AG04450 (cell line): ENCODE measurements at regions of chr11 and their contacts with region 1.

Region 1: DNA sequence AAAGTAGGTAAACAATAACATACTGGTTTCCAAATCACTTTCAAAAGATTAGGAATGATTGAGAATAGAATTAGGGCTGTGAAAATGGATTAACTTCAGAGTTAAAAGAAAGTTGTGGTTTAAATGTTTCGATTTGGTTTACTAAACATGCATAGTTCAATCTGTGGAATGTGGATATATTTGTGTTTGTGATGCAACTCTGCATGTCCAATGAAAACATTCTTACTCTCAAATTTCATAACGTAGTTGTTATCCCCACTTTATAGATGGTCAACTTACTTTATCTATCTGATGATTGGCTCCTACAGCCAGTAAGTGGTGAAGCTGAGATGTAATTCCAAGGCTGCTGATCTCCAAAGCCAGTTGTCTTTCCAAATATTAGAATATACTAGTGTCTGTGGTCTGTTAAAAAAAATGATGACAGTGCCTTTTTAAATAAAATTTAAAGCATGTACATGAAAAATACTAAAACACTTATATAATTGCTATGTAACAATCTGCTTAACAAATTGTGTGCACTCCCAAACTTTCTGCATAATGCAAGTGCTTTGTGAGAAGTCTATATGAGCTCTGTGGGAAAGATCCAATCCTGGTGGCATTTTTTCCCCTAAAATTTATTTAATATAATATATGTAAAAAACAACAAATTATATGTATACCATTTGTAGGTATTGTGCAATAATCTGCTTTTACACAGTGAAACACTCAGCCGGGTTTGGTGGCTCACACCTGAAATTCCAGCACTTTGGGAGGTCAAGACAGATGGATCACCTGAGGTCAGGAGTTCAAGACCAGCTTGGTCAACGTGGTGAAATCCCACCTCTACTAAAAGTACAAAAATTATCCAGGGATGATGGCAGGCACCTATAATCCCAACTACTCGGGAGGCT is 9.7 kb upstream of the SIK3 start:
- DNase-seq: no peak
- H3K4me3 ChIP-seq: no peak overlapping the region
- H3K27ac ChIP-seq: no peak overlapping the region
- H3K27me3 ChIP-seq: no peaks in the 10 kb centered on the region
- CTCF ChIP-seq: no peak

Region 2: GRCh38 chr11:116432301-116432700 is 675.6 kb before region 1 on chr11:
- CTCF ChIA-PET with region 1: no interaction called
- POLR2A ChIA-PET with region 1: no interaction called
- DNase-seq: no peak
- H3K4me3 ChIP-seq: no peak overlapping the region
- H3K27ac ChIP-seq: no peak overlapping the region
- H3K27me3 ChIP-seq: peaks cover 3% of the 10 kb centered on the region
- CTCF ChIP-seq: no peak

Region 3: DNA sequence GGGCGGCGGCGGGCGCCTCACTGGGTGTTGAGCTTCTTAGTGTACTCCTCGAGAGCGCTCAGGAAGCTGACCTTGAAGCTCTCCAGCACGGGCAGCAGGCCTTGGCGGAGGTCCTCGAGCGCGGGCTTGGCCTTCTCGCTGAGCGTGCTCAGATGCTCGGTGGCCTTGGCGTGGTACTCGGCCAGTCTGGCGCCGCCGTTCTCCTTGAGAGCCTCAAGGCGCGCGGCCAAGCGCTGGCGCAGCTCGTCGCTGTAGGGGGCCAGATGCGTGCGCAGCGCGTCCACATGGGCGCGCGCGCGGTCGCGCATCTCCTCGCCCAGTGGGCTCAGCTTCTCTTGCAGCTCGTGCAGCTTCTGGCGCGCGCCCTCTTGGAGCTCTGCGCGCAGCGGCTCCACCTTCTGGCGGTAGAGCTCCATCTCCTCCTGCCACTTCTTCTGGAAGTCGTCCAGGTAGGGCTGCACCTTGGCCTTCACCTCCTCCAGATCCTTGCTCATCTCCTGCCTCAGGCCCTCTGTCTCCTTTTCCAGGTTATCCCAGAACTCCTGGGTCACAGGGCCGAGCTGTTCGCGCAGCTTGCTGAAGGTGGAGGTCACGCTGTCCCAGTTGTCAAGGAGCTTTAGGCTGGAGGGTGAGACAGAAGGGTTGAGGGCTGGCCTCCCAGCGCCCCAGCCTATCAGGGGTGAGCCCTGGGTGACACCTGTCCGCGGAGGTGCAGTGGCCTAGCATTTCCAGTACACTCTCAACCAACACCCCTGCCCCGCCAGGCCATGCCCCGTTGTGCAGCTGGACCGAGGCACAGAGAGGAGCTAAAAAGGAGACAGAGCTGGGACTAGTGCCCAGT is 271.9 kb before region 1 on chr11:
- CTCF ChIA-PET with region 1: interaction called, 21 read pairs
- POLR2A ChIA-PET with region 1: no interaction called
- DNase-seq: peak; percentile 87
- H3K4me3 ChIP-seq: peak overlapping the region; percentile 55
- H3K27ac ChIP-seq: peak overlapping the region; percentile 21
- H3K27me3 ChIP-seq: no peaks in the 10 kb centered on the region
- CTCF ChIP-seq: peak; percentile 69

Region 4: GRCh38 chr11:116879800-116880625 is 227.9 kb before region 1 on chr11:
- CTCF ChIA-PET with region 1: interaction called, 113 read pairs
- POLR2A ChIA-PET with region 1: no interaction called
- DNase-seq: peak; percentile 59
- H3K4me3 ChIP-seq: no peak overlapping the region
- H3K27ac ChIP-seq: no peak overlapping the region
- H3K27me3 ChIP-seq: no peaks in the 10 kb centered on the region
- CTCF ChIP-seq: peak; percentile 89

Region 5: DNA sequence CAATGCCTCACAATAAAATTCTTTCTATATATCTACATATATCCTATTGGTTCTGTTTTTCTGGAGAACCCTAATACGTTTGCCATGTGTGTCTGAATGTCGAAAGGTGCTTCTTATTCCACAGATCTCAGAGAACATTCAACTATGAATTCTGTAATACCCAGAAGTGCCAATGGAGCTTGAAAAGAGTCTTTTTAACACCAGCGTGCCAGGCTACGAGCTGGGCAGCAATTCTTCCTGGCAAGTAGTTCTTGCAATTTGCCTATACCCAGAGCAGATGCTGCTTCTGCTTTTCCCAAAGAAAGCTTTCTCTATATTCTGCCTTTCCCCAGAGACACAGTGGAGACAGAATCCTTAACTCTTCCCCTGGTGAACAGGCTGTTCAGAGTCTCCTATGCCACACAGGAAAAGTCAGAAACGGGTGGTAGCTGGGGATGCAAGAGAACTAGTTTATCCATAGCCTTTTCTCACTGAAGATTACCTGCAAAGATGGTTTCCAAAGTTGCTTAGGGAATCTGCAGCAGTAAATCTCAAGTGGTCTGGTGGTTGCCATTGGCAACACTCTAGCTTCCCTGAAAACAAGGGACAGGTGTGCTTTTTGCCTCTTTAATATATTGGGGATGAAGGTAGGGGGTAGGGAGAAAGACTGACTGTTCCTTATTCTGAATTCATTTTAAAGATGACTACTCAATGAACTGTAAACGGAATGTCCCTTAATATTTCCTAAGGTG is 19.4 kb after region 1 on chr11:
- CTCF ChIA-PET with region 1: interaction called, 11 read pairs
- POLR2A ChIA-PET with region 1: no interaction called
- DNase-seq: no peak
- H3K4me3 ChIP-seq: no peak overlapping the region
- H3K27ac ChIP-seq: no peak overlapping the region
- H3K27me3 ChIP-seq: peaks cover 9% of the 10 kb centered on the region
- CTCF ChIP-seq: no peak

Region 6: DNA sequence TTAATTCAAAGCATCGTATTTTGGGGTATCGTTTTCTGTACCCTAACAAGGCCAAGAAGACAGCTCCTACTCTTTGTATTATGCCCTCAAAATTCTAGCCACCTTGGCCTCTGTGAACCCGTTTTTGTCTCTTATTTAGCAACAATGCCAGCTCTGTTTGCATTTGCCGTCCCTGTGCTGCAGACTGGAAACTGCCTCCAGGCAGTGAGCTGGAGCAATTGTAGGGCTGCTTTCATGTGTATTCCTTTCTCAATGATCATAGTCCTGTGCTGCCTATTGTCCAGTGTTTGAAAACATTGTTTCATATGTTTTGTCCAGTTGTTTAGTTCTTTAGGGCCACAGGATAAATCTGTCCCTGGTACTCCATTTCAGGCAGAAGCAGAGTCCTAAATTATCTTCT is 163.3 kb after region 1 on chr11:
- CTCF ChIA-PET with region 1: no interaction called
- POLR2A ChIA-PET with region 1: interaction called, 10 read pairs
- DNase-seq: no peak
- H3K4me3 ChIP-seq: no peak overlapping the region
- H3K27ac ChIP-seq: no peak overlapping the region
- H3K27me3 ChIP-seq: no peaks in the 10 kb centered on the region
- CTCF ChIP-seq: no peak